OCI-LY7 (cell line): ENCODE measurements at regions of chr22 and their contacts with region 1.

Region 1: DNA sequence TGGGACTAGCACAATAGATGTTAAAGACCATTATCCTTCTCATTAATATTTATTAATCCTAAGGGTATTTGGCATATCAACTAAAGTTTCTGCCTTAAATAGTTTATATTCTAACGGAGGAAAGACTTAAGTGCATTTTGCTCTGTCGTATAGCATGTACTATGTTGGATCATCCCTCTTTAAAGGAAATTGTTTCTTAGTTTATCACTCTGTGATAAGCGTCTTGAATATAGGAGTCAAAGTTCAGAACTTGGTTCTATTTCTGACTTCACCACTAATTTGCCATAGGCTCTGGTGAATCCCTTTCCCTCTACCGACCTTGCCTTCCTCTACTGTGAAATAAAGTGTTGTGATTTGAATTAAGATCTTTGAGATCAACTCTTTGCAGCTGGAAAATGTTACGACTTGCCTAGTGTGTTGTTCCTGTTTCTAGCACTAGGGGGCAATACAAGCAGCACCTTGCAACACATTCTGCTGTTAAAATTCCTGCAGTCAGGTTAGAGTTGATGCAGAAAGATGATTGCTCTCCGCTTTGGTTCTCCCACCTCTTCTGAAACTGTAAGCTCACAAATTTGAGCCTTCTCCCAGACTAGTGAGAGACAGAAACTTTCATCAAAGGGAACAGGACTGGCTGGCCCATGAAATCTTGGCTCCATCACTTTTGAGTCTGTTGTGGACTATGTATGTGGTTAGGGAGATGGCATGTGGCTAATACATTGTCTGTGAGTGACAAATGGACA is 27.8 kb upstream of the ZNRF3 start:
- DNase-seq: peak; percentile 70
- H3K4me3 ChIP-seq: no peak overlapping the region
- H3K27ac ChIP-seq: no peak overlapping the region
- H3K4me1 ChIP-seq: no peaks in the 10 kb centered on the region
- CTCF ChIP-seq: peak; percentile 97

Region 2: DNA sequence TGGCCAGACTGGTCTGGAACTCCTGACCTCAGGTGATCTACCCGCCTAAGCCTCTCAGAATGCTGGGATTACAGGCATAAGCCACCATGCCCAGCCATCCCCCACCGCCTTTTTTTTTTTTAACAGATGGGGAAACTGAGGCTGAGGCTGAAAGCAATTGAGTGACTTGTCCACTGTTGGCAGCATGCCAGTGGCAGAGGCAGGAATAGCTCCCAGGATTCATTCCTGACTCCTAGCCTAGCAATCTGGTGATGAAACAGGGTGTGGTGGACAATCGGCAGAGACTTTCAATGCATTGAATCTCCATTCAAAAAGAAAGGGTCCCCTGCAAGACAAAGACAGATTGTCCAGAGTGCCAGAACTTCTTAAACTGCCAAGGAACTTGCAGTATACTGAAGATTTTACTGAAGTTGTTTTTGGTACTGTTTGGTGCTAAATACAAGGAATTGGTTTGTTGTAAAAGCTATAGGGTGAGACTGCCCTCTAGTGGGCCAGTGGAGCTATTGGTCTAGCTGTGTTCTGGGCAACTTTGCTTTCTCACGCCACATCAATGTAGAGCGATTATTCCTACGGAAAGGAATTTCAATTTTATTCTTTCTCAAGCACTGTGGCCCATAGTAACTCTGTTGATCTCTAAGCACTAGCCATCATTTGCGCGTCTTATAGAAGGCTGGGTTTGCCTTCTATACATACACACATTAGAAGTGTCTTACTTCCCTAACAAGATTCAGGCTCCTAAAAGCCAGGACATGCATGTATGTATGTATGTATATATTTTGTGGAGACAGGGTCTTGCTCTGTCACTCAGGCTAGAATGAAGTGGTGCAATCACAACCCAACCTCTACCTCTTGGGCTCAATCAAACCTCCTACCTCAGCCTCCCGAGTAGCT is 185.1 kb after region 1 on chr22:
- CTCF ChIA-PET with region 1: no interaction called
- POLR2A ChIA-PET with region 1: no interaction called
- intact Hi-C with region 1: loop called (anchors 1 kb)
- DNase-seq: peak; percentile 76
- H3K4me3 ChIP-seq: no peak overlapping the region
- H3K27ac ChIP-seq: no peak overlapping the region
- H3K4me1 ChIP-seq: no peaks in the 10 kb centered on the region
- CTCF ChIP-seq: peak; percentile 99

Region 3: GRCh38 chr22:29154364-29155048 is 299.0 kb after region 1 on chr22:
- CTCF ChIA-PET with region 1: no interaction called
- POLR2A ChIA-PET with region 1: no interaction called
- intact Hi-C with region 1: loop called (anchors 1 kb)
- DNase-seq: peak; percentile 54
- H3K4me3 ChIP-seq: no peak overlapping the region
- H3K27ac ChIP-seq: no peak overlapping the region
- H3K4me1 ChIP-seq: no peaks in the 10 kb centered on the region
- CTCF ChIP-seq: peak; percentile 93

Region 4: DNA sequence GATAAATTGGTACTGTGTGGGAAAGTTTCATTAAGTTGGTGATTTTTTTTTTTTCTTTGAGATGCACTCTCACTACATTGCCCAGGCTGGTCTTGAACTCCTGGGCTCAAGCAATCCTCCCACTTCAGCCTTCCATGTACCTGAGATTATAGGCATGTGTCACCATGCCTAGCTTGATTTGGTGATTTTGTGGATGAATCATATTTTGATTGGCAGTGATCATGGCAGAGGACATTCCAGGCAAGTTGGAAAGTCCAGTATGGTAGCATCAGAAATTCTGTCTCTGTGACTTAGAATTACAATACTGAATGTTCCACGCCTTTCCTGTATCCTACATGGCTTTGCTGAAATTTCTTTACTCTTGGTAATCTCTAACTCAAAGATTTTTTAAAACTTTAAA is 1274.1 kb after region 1 on chr22:
- CTCF ChIA-PET with region 1: no interaction called
- POLR2A ChIA-PET with region 1: no interaction called
- intact Hi-C with region 1: no loop called
- DNase-seq: no peak
- H3K4me3 ChIP-seq: no peak overlapping the region
- H3K27ac ChIP-seq: no peak overlapping the region
- H3K4me1 ChIP-seq: no peaks in the 10 kb centered on the region
- CTCF ChIP-seq: no peak